Panc1 (cell line): ENCODE measurements at regions of chr13 and their contacts with region 1.

Region 1: GRCh38 chr13:24512197-24512907 is at the start of gene PARP4:
- DNase-seq: peak; percentile 61
- ATAC-seq: peak; percentile 94
- H3K4me3 ChIP-seq: peak within 1 kb of the TSS; percentile 69 to 79
- H3K27ac ChIP-seq: peak within 1 kb of the TSS; percentile 93
- H3K4me1 ChIP-seq: no peaks in the 10 kb centered on the region; the same call in 1 of the 2 replicates
- H3K27me3 ChIP-seq: no peaks in the 10 kb centered on the region
- CTCF ChIP-seq: no peak
- total RNA-seq, gene PARP4: 44.0 TPM

Region 2: GRCh38 chr13:24678151-24678550 is 165.8 kb after region 1 on chr13:
- CTCF ChIA-PET with region 1: no interaction called
- POLR2A ChIA-PET with region 1: interaction called, 12 read pairs
- in situ Hi-C with region 1: no loop called
- intact Hi-C with region 1: no loop called
- DNase-seq: no peak
- ATAC-seq: no peak
- H3K4me3 ChIP-seq: no peak overlapping the region
- H3K27ac ChIP-seq: no peak overlapping the region
- H3K4me1 ChIP-seq: no peaks in the 10 kb centered on the region
- H3K27me3 ChIP-seq: peaks cover 6% of the 10 kb centered on the region; the same call in 1 of the 2 replicates
- CTCF ChIP-seq: no peak